Esophagus muscularis mucosa (tissue), 4 donors: ENCODE measurements at regions of chr3 and their contacts with region 1.

Region 1: GRCh38 chr3:113051302-113051711 is 60.5 kb downstream of the GTPBP8 start:
- DNase-seq: peak; percentile 98
- H3K4me3 ChIP-seq: peak overlapping the region; percentile 26 to 32 (median 29)
- H3K27ac ChIP-seq: peak overlapping the region; percentile 69 to 78 (median 76)
- H3K4me1 ChIP-seq: peaks cover 12 to 29% (median 18%) of the 10 kb centered on the region in 4 donors
- H3K27me3 ChIP-seq: no peaks in the 10 kb centered on the region
- CTCF ChIP-seq: peak; percentile 96 to 98 (median 98)
- EP300 ChIP-seq: no peak
- POLR2A ChIP-seq: no peak

Region 2: GRCh38 chr3:112925969-112926368 is 125.3 kb before region 1 on chr3:
- intact Hi-C with region 1: no loop called
- DNase-seq: no peak
- H3K4me3 ChIP-seq: no peak overlapping the region
- H3K27ac ChIP-seq: no peak overlapping the region
- H3K4me1 ChIP-seq: no peaks in the 10 kb centered on the region
- H3K27me3 ChIP-seq: no peaks in the 10 kb centered on the region
- CTCF ChIP-seq: no peak
- EP300 ChIP-seq: no peak
- POLR2A ChIP-seq: no peak

Region 3: DNA sequence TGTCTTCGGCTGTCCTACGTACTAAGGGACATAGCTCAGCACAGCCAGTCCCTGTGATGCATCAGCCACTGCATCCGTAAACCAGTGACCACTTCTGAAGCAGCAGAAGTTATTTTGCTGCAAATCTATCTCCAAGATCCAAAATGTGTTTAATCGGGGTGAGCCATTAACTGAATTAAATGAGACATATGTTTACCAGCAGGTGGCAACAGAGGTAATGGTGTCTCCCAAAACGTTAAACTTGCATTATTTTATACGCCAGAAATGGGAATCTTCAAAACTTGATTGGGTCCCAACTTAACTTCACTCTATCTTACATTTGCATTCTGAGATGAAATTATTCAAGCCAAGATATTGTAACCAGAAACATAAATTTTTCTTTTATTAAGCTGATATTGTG is 84.8 kb after region 1 on chr3:
- intact Hi-C with region 1: loop called (anchors 5 kb)
- DNase-seq: no peak
- H3K4me3 ChIP-seq: no peak overlapping the region
- H3K27ac ChIP-seq: peak overlapping the region; percentile 29 to 60 (median 40)
- H3K4me1 ChIP-seq: peaks cover 0 to 45% (median 32%) of the 10 kb centered on the region in 4 donors
- H3K27me3 ChIP-seq: no peaks in the 10 kb centered on the region
- CTCF ChIP-seq: peak; percentile 62 to 66 (median 64)
- EP300 ChIP-seq: no peak
- POLR2A ChIP-seq: no peak

Region 4: GRCh38 chr3:113287803-113288648 is 236.7 kb after region 1 on chr3:
- intact Hi-C with region 1: loop called (anchors 2 kb)
- DNase-seq: no peak
- H3K4me3 ChIP-seq: no peak overlapping the region
- H3K27ac ChIP-seq: peak overlapping the region; percentile 65 to 79 (median 70)
- H3K4me1 ChIP-seq: peaks cover 3 to 52% (median 44%) of the 10 kb centered on the region in 4 donors
- H3K27me3 ChIP-seq: no peaks in the 10 kb centered on the region
- CTCF ChIP-seq: peak; percentile 99 to 100 (median 100)
- EP300 ChIP-seq: no peak
- POLR2A ChIP-seq: no peak

Region 5: GRCh38 chr3:113626503-113627371 is 575.4 kb after region 1 on chr3:
- intact Hi-C with region 1: loop called (anchors 10 kb)
- DNase-seq: no peak
- H3K4me3 ChIP-seq: peak overlapping the region; percentile 6 to 28 (median 12)
- H3K27ac ChIP-seq: no peak overlapping the region
- H3K4me1 ChIP-seq: peaks cover 0 to 33% (median 28%) of the 10 kb centered on the region in 4 donors
- H3K27me3 ChIP-seq: no peaks in the 10 kb centered on the region
- CTCF ChIP-seq: peak; percentile 78 to 93 (median 92)
- EP300 ChIP-seq: no peak
- POLR2A ChIP-seq: no peak

Region 6: DNA sequence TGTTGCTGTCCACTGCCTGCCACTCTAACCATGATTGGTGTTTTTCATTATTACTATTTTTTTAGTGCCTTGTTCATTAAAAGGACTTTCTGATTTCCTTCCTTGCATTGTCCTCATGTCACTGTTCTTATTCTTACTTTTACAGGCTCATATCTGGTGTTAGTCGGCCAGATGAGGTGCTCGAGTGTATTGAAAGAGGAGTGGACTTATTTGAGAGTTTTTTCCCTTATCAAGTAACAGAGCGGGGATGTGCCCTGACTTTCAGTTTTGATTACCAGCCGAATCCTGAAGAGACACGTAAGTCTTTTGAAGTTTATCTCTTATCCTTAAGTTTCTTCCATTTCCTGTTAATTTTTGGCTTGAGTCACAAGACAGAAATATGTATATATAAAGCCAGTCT is 1028.5 kb after region 1 on chr3:
- intact Hi-C with region 1: no loop called
- DNase-seq: no peak
- H3K4me3 ChIP-seq: no peak overlapping the region
- H3K27ac ChIP-seq: no peak overlapping the region
- H3K4me1 ChIP-seq: peaks cover 3 to 17% (median 12%) of the 10 kb centered on the region in 4 donors
- H3K27me3 ChIP-seq: no peaks in the 10 kb centered on the region
- CTCF ChIP-seq: no peak
- EP300 ChIP-seq: no peak
- POLR2A ChIP-seq: no peak